ENCODE measurements at regions of chr6 and their contacts with region 1.

Region 1: DNA sequence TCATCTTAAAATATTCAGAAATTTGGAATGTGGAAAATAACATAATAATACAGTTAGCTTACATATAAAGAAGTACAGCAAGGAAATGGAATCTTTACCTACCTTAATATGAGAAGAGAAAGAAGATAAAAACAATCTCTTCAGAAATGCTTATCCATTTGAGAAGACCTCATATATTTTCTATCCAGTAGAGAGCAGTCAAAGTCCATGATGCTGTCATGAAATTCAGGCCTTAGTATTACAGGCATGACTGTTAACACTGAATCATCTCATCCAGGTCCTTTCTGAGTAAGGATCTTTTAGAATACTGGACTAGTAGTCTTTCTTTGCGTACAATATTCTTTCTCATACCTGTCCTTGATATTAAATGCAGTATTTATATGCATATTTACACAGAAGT is 713.4 kb downstream of the CD109 start:
- DNase-seq: peak; percentile 87
- ATAC-seq: peak; percentile 99
- H3K4me3 ChIP-seq: no peak overlapping the region
- H3K27ac ChIP-seq: no peak overlapping the region
- H3K4me1 ChIP-seq: peaks cover 2% of the 10 kb centered on the region
- H3K27me3 ChIP-seq: no peaks in the 10 kb centered on the region
- CTCF ChIP-seq: peak; percentile 84
- POLR2A ChIP-seq: no peak
- RAD21 ChIP-seq: peak; percentile 97

Region 2: GRCh38 chr6:73739096-73739495 is 670.4 kb before region 1 on chr6:
- CTCF ChIA-PET with region 1: no interaction called
- POLR2A ChIA-PET with region 1: no interaction called
- dilution Hi-C with region 1: no loop called
- in situ Hi-C with region 1: no loop called
- intact Hi-C with region 1: loop called (anchors 1 kb)
- DNase-seq: peak; percentile 78
- ATAC-seq: peak; percentile 78
- H3K4me3 ChIP-seq: no peak overlapping the region
- H3K27ac ChIP-seq: no peak overlapping the region
- H3K4me1 ChIP-seq: peaks cover 2% of the 10 kb centered on the region; the same call in 1 of the 2 replicates
- H3K27me3 ChIP-seq: no peaks in the 10 kb centered on the region
- CTCF ChIP-seq: peak; percentile 86
- POLR2A ChIP-seq: no peak
- RAD21 ChIP-seq: peak; percentile 92

Region 3: GRCh38 chr6:73969971-73970970 is 439.2 kb before region 1 on chr6:
- CTCF ChIA-PET with region 1: interaction called, 4 read pairs
- POLR2A ChIA-PET with region 1: no interaction called
- dilution Hi-C with region 1: no loop called
- in situ Hi-C with region 1: no loop called
- intact Hi-C with region 1: loop called (anchors 5 kb)
- DNase-seq: peak; percentile 67
- ATAC-seq: peak; percentile 66
- H3K4me3 ChIP-seq: no peak overlapping the region
- H3K27ac ChIP-seq: no peak overlapping the region
- H3K4me1 ChIP-seq: peaks cover 2% of the 10 kb centered on the region; the same call in 1 of the 2 replicates
- H3K27me3 ChIP-seq: no peaks in the 10 kb centered on the region
- CTCF ChIP-seq: peak; percentile 75
- POLR2A ChIP-seq: no peak
- RAD21 ChIP-seq: peak; percentile 68

Region 4: GRCh38 chr6:74170118-74170517 is 239.3 kb before region 1 on chr6:
- CTCF ChIA-PET with region 1: interaction called, 3 read pairs
- POLR2A ChIA-PET with region 1: no interaction called
- dilution Hi-C with region 1: no loop called
- in situ Hi-C with region 1: no loop called
- intact Hi-C with region 1: loop called (anchors 5 kb)
- DNase-seq: peak; percentile 99
- ATAC-seq: peak; percentile 92
- H3K4me3 ChIP-seq: no peak overlapping the region
- H3K27ac ChIP-seq: peak overlapping the region; percentile 99; the same call in 1 of the 2 replicates
- H3K4me1 ChIP-seq: peaks cover 8% of the 10 kb centered on the region; the same call in 1 of the 2 replicates
- H3K27me3 ChIP-seq: no peaks in the 10 kb centered on the region
- CTCF ChIP-seq: no peak
- POLR2A ChIP-seq: no peak
- RAD21 ChIP-seq: no peak

Region 5: GRCh38 chr6:74277777-74278186 is 131.7 kb before region 1 on chr6:
- CTCF ChIA-PET with region 1: no interaction called
- POLR2A ChIA-PET with region 1: no interaction called
- dilution Hi-C with region 1: no loop called
- in situ Hi-C with region 1: no loop called
- intact Hi-C with region 1: no loop called
- DNase-seq: peak; percentile 17
- ATAC-seq: peak; percentile 21
- H3K4me3 ChIP-seq: no peak overlapping the region
- H3K27ac ChIP-seq: peak overlapping the region; percentile 58; the same call in 1 of the 2 replicates
- H3K4me1 ChIP-seq: peaks cover 2% of the 10 kb centered on the region; the same call in 1 of the 2 replicates
- H3K27me3 ChIP-seq: no peaks in the 10 kb centered on the region
- CTCF ChIP-seq: no peak
- POLR2A ChIP-seq: no peak
- RAD21 ChIP-seq: no peak

Region 6: GRCh38 chr6:74574794-74575193 is 165.3 kb after region 1 on chr6:
- CTCF ChIA-PET with region 1: interaction called, 4 read pairs
- POLR2A ChIA-PET with region 1: no interaction called
- dilution Hi-C with region 1: no loop called
- in situ Hi-C with region 1: no loop called
- intact Hi-C with region 1: loop called (anchors 2 kb)
- DNase-seq: peak; percentile 58
- ATAC-seq: peak; percentile 43; the same call in 1 of the 2 replicates
- H3K4me3 ChIP-seq: no peak overlapping the region
- H3K27ac ChIP-seq: no peak overlapping the region
- H3K4me1 ChIP-seq: peaks cover 10% of the 10 kb centered on the region
- H3K27me3 ChIP-seq: no peaks in the 10 kb centered on the region
- CTCF ChIP-seq: peak; percentile 56
- POLR2A ChIP-seq: no peak
- RAD21 ChIP-seq: peak; percentile 63

Region 7: GRCh38 chr6:74991573-74992332 is 582.3 kb after region 1 on chr6:
- CTCF ChIA-PET with region 1: no interaction called
- POLR2A ChIA-PET with region 1: no interaction called
- dilution Hi-C with region 1: no loop called
- in situ Hi-C with region 1: no loop called
- intact Hi-C with region 1: loop called (anchors 1 kb)
- DNase-seq: peak; percentile 38
- ATAC-seq: peak; percentile 64
- H3K4me3 ChIP-seq: no peak overlapping the region
- H3K27ac ChIP-seq: no peak overlapping the region
- H3K4me1 ChIP-seq: no peaks in the 10 kb centered on the region
- H3K27me3 ChIP-seq: no peaks in the 10 kb centered on the region
- CTCF ChIP-seq: peak; percentile 54
- POLR2A ChIP-seq: no peak
- RAD21 ChIP-seq: peak; percentile 44

Region 8: GRCh38 chr6:75098709-75099108 is 689.3 kb after region 1 on chr6:
- CTCF ChIA-PET with region 1: no interaction called
- POLR2A ChIA-PET with region 1: no interaction called
- dilution Hi-C with region 1: no loop called
- in situ Hi-C with region 1: no loop called
- intact Hi-C with region 1: loop called (anchors 5 kb)
- DNase-seq: peak; percentile 98
- ATAC-seq: peak; percentile 73
- H3K4me3 ChIP-seq: no peak overlapping the region
- H3K27ac ChIP-seq: peak overlapping the region; percentile 78; the same call in 1 of the 2 replicates
- H3K4me1 ChIP-seq: peaks cover 27% of the 10 kb centered on the region
- H3K27me3 ChIP-seq: no peaks in the 10 kb centered on the region
- CTCF ChIP-seq: no peak
- POLR2A ChIP-seq: no peak
- RAD21 ChIP-seq: no peak